MCF 10A (cell line): ENCODE measurements at regions of chrX and their contacts with region 1.

Region 1: DNA sequence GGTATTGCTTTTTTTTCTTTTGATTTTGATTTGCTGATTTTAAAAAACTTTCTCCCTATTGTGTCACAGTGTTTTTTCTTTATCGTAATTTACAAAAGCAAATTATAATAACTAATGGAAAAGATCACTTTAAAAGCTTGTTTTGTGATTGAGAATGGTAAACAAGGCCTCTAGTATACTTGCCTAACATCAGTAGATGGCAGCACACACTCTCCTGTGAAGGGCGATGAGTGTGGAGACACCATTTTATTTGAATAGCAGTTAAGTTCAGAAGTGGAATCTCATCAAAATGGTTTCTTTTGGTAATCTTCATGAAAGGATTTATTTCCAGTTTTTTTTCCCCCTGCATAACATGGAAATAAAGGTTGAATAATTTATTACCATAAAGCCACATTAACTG is 72.3 kb downstream of the PAK3 start:
- DNase-seq: peak; percentile 24
- H3K4me3 Mint-ChIP-seq: no peak overlapping the region
- H3K27ac Mint-ChIP-seq: no peak overlapping the region
- H3K4me1 Mint-ChIP-seq: no peaks in the 10 kb centered on the region
- H3K27me3 Mint-ChIP-seq: peaks cover 81% of the 10 kb centered on the region
- CTCF ChIP-seq: peak; percentile 12

Region 2: DNA sequence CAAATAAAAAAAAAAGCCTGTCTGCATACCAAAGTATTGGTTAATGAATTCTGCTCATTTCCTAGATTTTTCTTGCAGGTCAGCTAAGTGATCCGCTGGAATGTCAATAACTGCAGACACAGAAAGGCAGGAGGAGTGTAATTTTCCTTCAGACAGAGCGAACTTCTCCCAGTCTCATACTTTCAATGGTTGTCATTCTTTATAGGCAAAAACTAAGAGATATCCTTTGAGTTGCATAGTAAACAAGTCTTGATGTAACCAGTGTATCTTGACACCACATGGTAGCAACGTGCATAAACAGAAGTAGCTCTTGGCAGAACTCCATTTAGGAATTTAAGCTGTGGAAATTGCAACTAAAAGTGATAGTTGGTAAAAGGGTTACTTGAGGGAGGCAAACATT is 93.8 kb after region 1 on chrX:
- CTCF ChIA-PET with region 1: no interaction called
- POLR2A ChIA-PET with region 1: no interaction called
- intact Hi-C with region 1: no loop called
- DNase-seq: no peak
- H3K4me3 Mint-ChIP-seq: no peak overlapping the region
- H3K27ac Mint-ChIP-seq: no peak overlapping the region
- H3K4me1 Mint-ChIP-seq: no peaks in the 10 kb centered on the region
- H3K27me3 Mint-ChIP-seq: peaks cover 81% of the 10 kb centered on the region
- CTCF ChIP-seq: no peak

Region 3: GRCh38 chrX:111568354-111568753 is 400.0 kb after region 1 on chrX:
- CTCF ChIA-PET with region 1: no interaction called
- POLR2A ChIA-PET with region 1: no interaction called
- intact Hi-C with region 1: no loop called
- DNase-seq: peak; percentile 47
- H3K4me3 Mint-ChIP-seq: no peak overlapping the region
- H3K27ac Mint-ChIP-seq: no peak overlapping the region
- H3K4me1 Mint-ChIP-seq: no peaks in the 10 kb centered on the region
- H3K27me3 Mint-ChIP-seq: peaks cover 67% of the 10 kb centered on the region
- CTCF ChIP-seq: peak; percentile 50

Region 4: DNA sequence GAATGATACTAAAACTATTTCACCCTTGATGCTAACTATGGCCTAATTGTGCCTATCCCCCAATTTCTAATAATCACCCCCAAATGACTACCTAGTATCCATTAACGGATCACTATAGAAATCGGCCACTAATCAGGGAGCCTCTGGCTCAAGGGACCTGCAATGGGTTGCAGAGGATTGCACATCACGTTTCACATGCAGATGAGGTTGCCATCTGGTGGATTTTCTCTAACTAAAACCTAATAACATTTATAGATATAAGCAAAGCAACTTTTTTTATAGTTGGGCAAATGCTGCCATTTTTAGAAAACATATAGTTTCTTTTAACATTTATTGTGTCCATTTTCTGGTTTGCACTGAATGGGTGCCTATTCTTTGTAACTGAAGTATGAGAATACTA is 484.4 kb after region 1 on chrX:
- CTCF ChIA-PET with region 1: no interaction called
- POLR2A ChIA-PET with region 1: no interaction called
- intact Hi-C with region 1: loop called (anchors 2 kb)
- DNase-seq: peak; percentile 28
- H3K4me3 Mint-ChIP-seq: no peak overlapping the region
- H3K27ac Mint-ChIP-seq: no peak overlapping the region
- H3K4me1 Mint-ChIP-seq: no peaks in the 10 kb centered on the region
- H3K27me3 Mint-ChIP-seq: peaks cover 42% of the 10 kb centered on the region
- CTCF ChIP-seq: peak; percentile 20